Caco-2 (cell line): ENCODE measurements at regions of chr3 and their contacts with region 1.

Region 1: DNA sequence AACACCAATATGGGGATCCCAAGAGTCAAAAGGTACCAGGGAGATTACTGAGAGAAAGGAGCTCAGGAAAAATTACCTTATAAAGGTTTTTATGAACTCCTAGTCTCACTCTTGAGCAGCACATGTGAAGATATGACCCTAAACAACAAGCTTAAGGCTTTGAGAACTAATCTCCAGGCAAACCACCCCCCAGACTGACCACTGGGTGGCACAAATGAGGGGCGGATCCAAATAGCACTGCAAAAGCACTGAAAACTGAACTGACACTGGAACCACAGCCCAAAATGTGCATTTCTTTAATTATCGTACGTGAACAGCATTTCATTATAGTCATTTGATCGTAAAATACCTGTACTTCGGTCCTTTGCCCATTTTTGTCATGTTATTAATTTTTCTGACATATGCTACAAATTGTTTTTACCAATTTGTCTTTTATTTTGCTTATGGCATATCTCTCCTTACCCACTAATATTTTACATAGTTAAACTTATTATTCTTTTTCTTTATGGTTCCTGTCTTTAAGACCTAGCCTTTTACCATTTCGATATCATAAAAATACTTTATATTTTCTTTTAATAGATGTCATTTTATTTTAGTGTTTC is 31.5 kb upstream of the TFDP2 start:
- DNase-seq: peak; percentile 44 to 61
- H3K4me3 ChIP-seq: no peak overlapping the region
- H3K4me3 Mint-ChIP-seq: peak overlapping the region; percentile 8
- H3K27ac Mint-ChIP-seq: peak overlapping the region; percentile 72
- H3K4me1 ChIP-seq: peaks cover 9% of the 10 kb centered on the region; the same call in 1 of the 2 replicates
- H3K4me1 Mint-ChIP-seq: peaks cover 7% of the 10 kb centered on the region
- H3K27me3 ChIP-seq: no peaks in the 10 kb centered on the region
- H3K27me3 Mint-ChIP-seq: no peaks in the 10 kb centered on the region
- CTCF ChIP-seq: peak; percentile 71 to 72

Region 2: GRCh38 chr3:142279965-142280590 is 99.2 kb after region 1 on chr3:
- CTCF ChIA-PET with region 1: interaction called, 18 read pairs
- POLR2A ChIA-PET with region 1: no interaction called
- intact Hi-C with region 1: loop called (anchors 1 kb)
- DNase-seq: peak; percentile 55 to 64
- H3K4me3 ChIP-seq: no peak overlapping the region
- H3K4me3 Mint-ChIP-seq: no peak overlapping the region
- H3K27ac Mint-ChIP-seq: no peak overlapping the region
- H3K4me1 ChIP-seq: no peaks in the 10 kb centered on the region
- H3K4me1 Mint-ChIP-seq: no peaks in the 10 kb centered on the region
- H3K27me3 ChIP-seq: no peaks in the 10 kb centered on the region
- H3K27me3 Mint-ChIP-seq: no peaks in the 10 kb centered on the region
- CTCF ChIP-seq: peak; percentile 48 to 56

Region 3: DNA sequence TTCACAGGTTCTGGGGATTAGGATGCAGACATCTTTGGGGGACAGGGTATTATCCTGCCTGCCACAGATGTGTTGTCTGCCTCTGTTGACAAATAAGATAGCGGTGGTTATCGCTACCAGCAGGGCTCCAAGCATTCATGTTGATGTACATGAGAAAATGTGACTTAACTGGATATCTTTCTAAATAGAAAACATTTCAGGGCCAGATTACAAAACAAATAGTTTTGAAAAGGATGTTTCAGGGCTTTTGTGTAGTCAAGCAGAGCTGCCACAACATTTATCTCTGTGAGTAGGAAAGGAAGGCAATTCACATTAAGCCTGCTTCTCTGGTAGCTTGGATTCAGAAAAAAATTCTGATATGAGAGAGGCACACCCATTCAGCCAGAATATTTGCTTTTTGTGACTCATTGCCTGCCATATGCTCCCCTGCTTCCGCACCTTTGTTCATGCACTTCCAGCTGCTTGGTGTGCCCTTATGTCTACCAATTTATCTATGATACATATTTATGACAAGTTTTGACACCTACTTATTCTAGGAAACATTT is 438.1 kb after region 1 on chr3:
- CTCF ChIA-PET with region 1: no interaction called
- POLR2A ChIA-PET with region 1: no interaction called
- intact Hi-C with region 1: no loop called
- DNase-seq: peak; percentile 24 to 38
- H3K4me3 ChIP-seq: no peak overlapping the region
- H3K4me3 Mint-ChIP-seq: no peak overlapping the region
- H3K27ac Mint-ChIP-seq: peak overlapping the region; percentile 30
- H3K4me1 ChIP-seq: peaks cover 27% of the 10 kb centered on the region
- H3K4me1 Mint-ChIP-seq: peaks cover 10% of the 10 kb centered on the region
- H3K27me3 ChIP-seq: no peaks in the 10 kb centered on the region
- H3K27me3 Mint-ChIP-seq: no peaks in the 10 kb centered on the region
- CTCF ChIP-seq: no peak